Activated CD8-positive, alpha-beta T cell treated with anti-CD3 and anti-CD28 coated beads for 36 hours (primary cell): ENCODE measurements at regions of chr1 and their contacts with region 1.

Region 1: DNA sequence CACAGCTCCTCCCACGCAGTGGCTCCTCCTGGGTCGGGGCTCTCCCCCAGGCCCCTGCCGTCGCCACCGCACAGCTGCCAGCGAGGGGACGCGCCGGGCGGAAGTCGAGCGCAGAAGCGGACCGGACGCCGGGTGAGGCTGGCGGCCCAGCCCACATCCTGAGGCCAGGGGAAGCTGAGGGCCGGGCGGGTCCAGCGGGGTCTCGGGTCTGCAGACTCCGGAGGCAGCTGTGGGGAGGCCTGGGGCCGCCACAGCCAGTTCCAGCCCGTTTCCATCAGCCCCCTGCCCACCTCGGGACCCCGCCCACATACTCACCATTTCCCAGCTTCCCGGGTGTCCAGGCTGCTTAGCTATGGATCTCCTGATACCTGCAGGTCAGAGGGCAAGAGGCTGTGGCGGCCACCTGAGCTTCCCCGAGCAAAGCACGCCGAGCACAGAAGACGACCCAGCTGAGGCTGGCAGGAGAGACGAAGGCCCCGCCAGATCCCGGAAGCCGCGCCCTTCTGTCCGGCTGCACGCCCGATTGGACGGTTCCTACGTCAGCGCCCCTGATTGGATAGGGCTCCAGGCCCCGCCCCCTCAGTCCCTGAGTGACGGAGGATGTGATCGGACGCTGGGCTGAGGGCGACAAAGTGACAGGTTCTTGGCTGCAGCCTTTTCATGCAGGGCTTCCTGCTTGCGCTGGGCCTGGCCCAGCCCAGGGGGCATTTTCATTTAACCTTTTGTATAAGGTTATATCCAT is 38.7 kb upstream of the ZNF124 start:
- DNase-seq: peak; percentile 99
- ATAC-seq: peak; percentile 99
- H3K4me3 Mint-ChIP-seq: peak overlapping the region; percentile 91
- H3K27ac Mint-ChIP-seq: peak overlapping the region; percentile 91
- H3K4me1 Mint-ChIP-seq: peaks cover 63% of the 10 kb centered on the region
- H3K27me3 Mint-ChIP-seq: no peaks in the 10 kb centered on the region
- CTCF ChIP-seq: no peak

Region 2: GRCh38 chr1:247324923-247325322 is 114.4 kb after region 1 on chr1:
- CTCF ChIA-PET with region 1: interaction called, 3 read pairs
- POLR2A ChIA-PET with region 1: interaction called, 4 read pairs
- intact Hi-C with region 1: loop called (anchors 5 kb)
- DNase-seq: no peak
- ATAC-seq: no peak
- H3K4me3 Mint-ChIP-seq: no peak overlapping the region
- H3K27ac Mint-ChIP-seq: no peak overlapping the region
- H3K4me1 Mint-ChIP-seq: peaks cover 84% of the 10 kb centered on the region
- H3K27me3 Mint-ChIP-seq: no peaks in the 10 kb centered on the region
- CTCF ChIP-seq: no peak